ENCODE measurements at regions of chr10 and their contacts with region 1.

Region 1: DNA sequence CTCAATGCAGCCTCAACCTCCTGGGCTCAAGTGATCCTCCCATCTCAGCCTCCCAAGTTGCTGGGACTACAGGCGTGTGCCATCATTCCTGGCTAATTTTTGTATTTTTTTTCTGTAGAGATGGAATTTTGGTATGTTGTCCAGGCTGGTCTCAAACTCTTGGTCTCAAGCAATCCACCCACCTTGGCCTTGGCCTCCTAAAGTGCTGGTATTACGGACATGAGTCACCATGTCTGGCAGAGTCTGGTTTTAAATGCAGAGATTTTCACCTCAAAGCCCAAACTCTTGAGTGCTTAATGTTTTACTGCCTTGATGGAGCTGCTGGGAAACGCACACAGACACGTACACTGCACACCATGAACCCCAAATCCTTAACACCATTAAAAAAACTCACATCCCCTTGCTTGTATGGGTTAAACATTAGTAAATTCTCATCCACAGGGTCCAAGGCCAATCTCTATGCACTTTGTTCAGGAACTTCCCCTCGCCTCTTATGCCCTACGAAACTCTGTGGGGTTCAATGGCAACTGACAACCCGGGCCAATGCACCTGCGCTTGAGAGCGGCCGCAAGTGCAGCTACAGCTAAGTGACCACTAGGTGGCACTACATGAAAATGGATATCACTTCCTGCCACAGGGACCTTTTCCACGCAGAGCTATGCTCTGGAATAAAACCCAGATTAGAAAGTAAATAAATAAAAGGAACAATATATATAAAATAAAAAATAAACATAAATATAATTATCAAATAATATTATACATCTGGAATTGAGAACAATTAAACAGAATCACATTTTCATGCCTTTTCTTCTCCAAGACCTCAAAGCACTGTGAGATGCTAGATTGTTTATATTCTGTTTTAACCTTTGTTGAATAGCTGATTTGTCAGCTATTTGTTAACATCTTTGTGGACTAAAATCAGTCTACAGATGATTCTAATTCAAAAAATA is 66.9 kb upstream of the AFAP1L2 start:
- DNase-seq: peak; percentile 32 to 87 (median 59)
- ATAC-seq: peak; percentile 82 to 88 (median 84)
- H3K4me3 ChIP-seq: no peak overlapping the region
- H3K4me3 Mint-ChIP-seq: peak overlapping the region in 1 of 3 donors; percentile 10
- H3K27ac ChIP-seq: peak overlapping the region; percentile 20
- H3K27ac Mint-ChIP-seq: peak overlapping the region; percentile 58 to 75
- H3K4me1 ChIP-seq: peaks cover 0 to 10% of the 10 kb centered on the region in 2 experiments
- H3K4me1 Mint-ChIP-seq: peaks cover 36 to 44% (median 42%) of the 10 kb centered on the region in 3 donors
- H3K27me3 ChIP-seq: no peaks in the 10 kb centered on the region
- H3K27me3 Mint-ChIP-seq: no peaks in the 10 kb centered on the region

Region 2: GRCh38 chr10:114526504-114527238 is 55.4 kb after region 1 on chr10:
- CTCF ChIA-PET with region 1: interaction called, 4 to 20 read pairs
- POLR2A ChIA-PET with region 1: interaction called, 5 to 6 read pairs
- DNase-seq: peak; percentile 71 to 97 (median 91)
- ATAC-seq: peak; percentile 92 to 96 (median 96)
- H3K4me3 ChIP-seq: peak overlapping the region; percentile 68 to 93
- H3K4me3 Mint-ChIP-seq: peak overlapping the region; percentile 93 to 94 (median 94)
- H3K27ac ChIP-seq: peak overlapping the region; percentile 83
- H3K27ac Mint-ChIP-seq: peak overlapping the region; percentile 95 to 98
- H3K4me1 ChIP-seq: peaks cover 33 to 59% of the 10 kb centered on the region in 2 experiments
- H3K4me1 Mint-ChIP-seq: peaks cover 57 to 74% (median 67%) of the 10 kb centered on the region in 3 donors
- H3K27me3 ChIP-seq: no peaks in the 10 kb centered on the region
- H3K27me3 Mint-ChIP-seq: no peaks in the 10 kb centered on the region

Region 3: DNA sequence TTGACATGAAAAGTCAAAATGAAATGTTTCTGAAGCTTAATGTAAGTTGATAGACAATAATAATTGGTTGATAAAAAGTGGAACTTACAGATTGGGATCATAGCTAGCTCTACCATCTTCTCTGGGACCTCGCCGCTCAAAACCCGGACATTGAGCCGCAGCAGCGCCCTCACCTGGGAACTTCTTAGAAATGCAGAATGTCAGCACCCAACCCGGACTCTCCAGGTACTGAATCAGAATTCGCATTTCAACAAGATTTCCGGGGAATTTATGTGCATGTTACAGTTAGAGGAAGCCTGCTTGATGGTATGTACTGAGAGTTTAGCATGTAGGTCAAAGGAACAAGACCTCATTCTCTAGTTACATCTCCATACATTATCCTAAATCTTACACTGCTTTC is 223.5 kb after region 1 on chr10:
- CTCF ChIA-PET with region 1: interaction called, 4 to 10 read pairs
- POLR2A ChIA-PET with region 1: no interaction called
- DNase-seq: peak in 26 of 35 experiments; percentile 2 to 55 (median 16)
- ATAC-seq: no peak
- H3K4me3 ChIP-seq: no peak overlapping the region
- H3K4me3 Mint-ChIP-seq: no peak overlapping the region
- H3K27ac ChIP-seq: no peak overlapping the region
- H3K27ac Mint-ChIP-seq: no peak overlapping the region
- H3K4me1 ChIP-seq: peaks cover 9 to 12% of the 10 kb centered on the region in 2 experiments
- H3K4me1 Mint-ChIP-seq: peaks cover 5 to 12% (median 12%) of the 10 kb centered on the region in 3 donors
- H3K27me3 ChIP-seq: peaks cover 0 to 8% of the 10 kb centered on the region in 2 experiments
- H3K27me3 Mint-ChIP-seq: peaks cover 9 to 13% of the 10 kb centered on the region in 2 donors

Region 4: GRCh38 chr10:114779803-114780609 is 308.8 kb after region 1 on chr10:
- CTCF ChIA-PET with region 1: interaction called, 3 to 45 read pairs
- POLR2A ChIA-PET with region 1: no interaction called
- DNase-seq: no peak
- ATAC-seq: no peak
- H3K4me3 ChIP-seq: no peak overlapping the region
- H3K4me3 Mint-ChIP-seq: no peak overlapping the region
- H3K27ac ChIP-seq: no peak overlapping the region
- H3K27ac Mint-ChIP-seq: no peak overlapping the region
- H3K4me1 ChIP-seq: no peaks in the 10 kb centered on the region
- H3K4me1 Mint-ChIP-seq: no peaks in the 10 kb centered on the region
- H3K27me3 ChIP-seq: no peaks in the 10 kb centered on the region
- H3K27me3 Mint-ChIP-seq: peaks cover 0 to 12% of the 10 kb centered on the region in 2 donors

Measured in T-cell (primary cell).